GM12878 (cell line): ENCODE measurements at regions of chr10 and their contacts with region 1.

Region 1: GRCh38 chr10:33772370-33773252 is 438.1 kb upstream of the NRP1 start:
- DNase-seq: no peak
- ATAC-seq: peak; percentile 77
- H3K4me3 ChIP-seq: no peak overlapping the region
- H3K27ac ChIP-seq: no peak overlapping the region
- H3K4me1 ChIP-seq: no peaks in the 10 kb centered on the region
- H3K27me3 ChIP-seq: no peaks in the 10 kb centered on the region
- CTCF ChIP-seq: no peak
- EP300 ChIP-seq: no peak
- POLR2A ChIP-seq: no peak
- RAD21 ChIP-seq: no peak

Region 2: DNA sequence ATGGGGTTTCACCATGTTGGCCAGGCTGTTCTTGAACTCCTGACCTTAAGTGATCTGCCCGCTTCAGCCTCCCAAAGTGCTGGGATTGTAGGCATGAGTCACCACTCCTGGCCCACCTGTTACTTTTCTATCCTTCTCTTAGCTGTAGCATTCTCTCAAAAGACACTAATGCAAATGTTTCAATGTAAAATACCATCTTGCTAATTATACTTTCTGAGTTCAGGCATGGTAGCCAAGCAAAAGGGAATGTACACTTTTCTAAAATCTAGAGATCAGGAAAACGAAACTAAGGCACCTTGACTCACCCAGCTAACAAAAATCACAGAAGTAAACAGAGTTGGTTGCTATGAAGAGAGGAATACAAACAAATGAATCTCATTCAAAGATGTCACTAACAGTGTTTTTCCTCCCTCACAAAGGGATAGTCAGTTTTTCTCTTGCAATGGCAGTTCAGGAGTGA is 37.1 kb before region 1 on chr10:
- CTCF ChIA-PET with region 1: interaction called, 7 read pairs
- POLR2A ChIA-PET with region 1: interaction called, 3 read pairs
- RAD21 ChIA-PET with region 1: interaction called, 13 read pairs
- SMC1A ChIA-PET with region 1: interaction called, 10 read pairs
- in situ Hi-C with region 1: no loop called
- intact Hi-C with region 1: no loop called
- DNase-seq: no peak
- ATAC-seq: peak; percentile 55
- H3K4me3 ChIP-seq: no peak overlapping the region
- H3K27ac ChIP-seq: no peak overlapping the region
- H3K4me1 ChIP-seq: no peaks in the 10 kb centered on the region
- H3K27me3 ChIP-seq: no peaks in the 10 kb centered on the region
- CTCF ChIP-seq: no peak
- EP300 ChIP-seq: no peak
- POLR2A ChIP-seq: no peak
- RAD21 ChIP-seq: no peak

Region 3: GRCh38 chr10:33760056-33760943 is 12.3 kb before region 1 on chr10:
- CTCF ChIA-PET with region 1: interaction called, 5 read pairs
- POLR2A ChIA-PET with region 1: interaction called, 6 read pairs
- RAD21 ChIA-PET with region 1: interaction called, 18 read pairs
- SMC1A ChIA-PET with region 1: interaction called, 84 read pairs
- in situ Hi-C with region 1: no loop called
- intact Hi-C with region 1: no loop called
- DNase-seq: no peak
- ATAC-seq: no peak
- H3K4me3 ChIP-seq: no peak overlapping the region
- H3K27ac ChIP-seq: no peak overlapping the region
- H3K4me1 ChIP-seq: no peaks in the 10 kb centered on the region
- H3K27me3 ChIP-seq: no peaks in the 10 kb centered on the region
- CTCF ChIP-seq: no peak
- EP300 ChIP-seq: no peak
- POLR2A ChIP-seq: no peak
- RAD21 ChIP-seq: no peak

Region 4: GRCh38 chr10:33791267-33791650 is 18.6 kb after region 1 on chr10:
- CTCF ChIA-PET with region 1: no interaction called
- POLR2A ChIA-PET with region 1: interaction called, 3 read pairs
- RAD21 ChIA-PET with region 1: interaction called, 6 read pairs
- SMC1A ChIA-PET with region 1: interaction called, 95 read pairs
- in situ Hi-C with region 1: no loop called
- intact Hi-C with region 1: no loop called
- DNase-seq: no peak
- ATAC-seq: no peak
- H3K4me3 ChIP-seq: no peak overlapping the region
- H3K27ac ChIP-seq: no peak overlapping the region
- H3K4me1 ChIP-seq: no peaks in the 10 kb centered on the region
- H3K27me3 ChIP-seq: no peaks in the 10 kb centered on the region
- CTCF ChIP-seq: no peak
- EP300 ChIP-seq: no peak
- POLR2A ChIP-seq: no peak
- RAD21 ChIP-seq: no peak

Region 5: DNA sequence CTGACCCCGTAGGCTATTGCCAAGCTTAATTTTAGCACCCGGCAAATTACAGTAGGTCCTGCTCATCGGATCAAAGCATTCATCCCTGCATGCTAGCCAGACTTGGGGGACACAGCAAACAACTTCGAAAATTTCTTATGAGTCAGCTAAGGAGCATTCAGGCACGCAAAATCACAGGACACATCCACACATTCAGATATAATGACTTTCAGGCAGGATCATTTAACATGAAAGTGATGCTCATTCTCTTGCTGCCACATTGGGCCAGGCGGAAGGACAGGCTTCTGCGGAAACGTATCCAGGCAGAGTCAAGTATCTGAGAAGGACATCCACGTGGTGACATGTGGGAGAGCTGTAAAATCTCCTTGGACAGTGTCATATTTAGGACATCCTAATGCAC is 35.9 kb after region 1 on chr10:
- CTCF ChIA-PET with region 1: no interaction called
- POLR2A ChIA-PET with region 1: interaction called, 3 read pairs
- RAD21 ChIA-PET with region 1: interaction called, 6 read pairs
- SMC1A ChIA-PET with region 1: interaction called, 15 read pairs
- in situ Hi-C with region 1: no loop called
- intact Hi-C with region 1: no loop called
- DNase-seq: no peak
- ATAC-seq: no peak
- H3K4me3 ChIP-seq: no peak overlapping the region
- H3K27ac ChIP-seq: no peak overlapping the region
- H3K4me1 ChIP-seq: no peaks in the 10 kb centered on the region
- H3K27me3 ChIP-seq: no peaks in the 10 kb centered on the region
- CTCF ChIP-seq: no peak
- EP300 ChIP-seq: no peak
- POLR2A ChIP-seq: no peak
- RAD21 ChIP-seq: no peak